Activated CD4-positive, alpha-beta T cell treated with anti-CD3 and anti-CD28 coated beads, Interleukin-2, amount 10 ng/mL, durations not matched to agents 24 days and 14 days (primary cell): ENCODE measurements at regions of chr17 and their contacts with region 1.

Region 1: DNA sequence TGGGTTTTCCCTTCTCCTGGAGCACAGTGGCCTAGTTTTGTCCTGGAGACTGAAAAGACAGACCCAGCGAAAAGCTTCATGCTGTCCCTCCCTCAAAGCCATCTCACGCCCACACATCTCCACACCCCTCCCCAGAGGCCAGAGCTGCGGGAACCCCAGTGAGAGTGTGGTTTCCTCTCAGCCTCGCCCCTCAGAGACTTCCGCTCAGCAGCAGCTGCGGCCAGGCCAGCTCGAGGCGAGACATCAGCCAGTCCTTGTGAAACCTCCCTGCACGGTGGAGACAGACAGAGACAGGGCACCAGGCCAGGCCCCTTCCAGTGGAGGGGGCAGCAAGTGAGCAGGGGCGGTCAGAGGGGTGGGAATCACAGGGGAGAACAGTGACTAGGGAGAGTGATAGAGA is 77.0 kb upstream of the TNRC6C start:
- DNase-seq: peak; percentile 95
- H3K4me3 Mint-ChIP-seq: peak overlapping the region; percentile 83
- H3K27ac Mint-ChIP-seq: peak overlapping the region; percentile 90
- H3K4me1 Mint-ChIP-seq: peaks cover 52% of the 10 kb centered on the region
- H3K27me3 Mint-ChIP-seq: peaks cover 12% of the 10 kb centered on the region

Region 2: GRCh38 chr17:77666881-77667395 is 214.6 kb before region 1 on chr17:
- intact Hi-C with region 1: loop called (anchors 10 kb)
- DNase-seq: peak; percentile 95
- H3K4me3 Mint-ChIP-seq: peak overlapping the region; percentile 88
- H3K27ac Mint-ChIP-seq: peak overlapping the region; percentile 97
- H3K4me1 Mint-ChIP-seq: peaks cover 34% of the 10 kb centered on the region
- H3K27me3 Mint-ChIP-seq: no peaks in the 10 kb centered on the region

Region 3: GRCh38 chr17:77779711-77780539 is 101.6 kb before region 1 on chr17:
- intact Hi-C with region 1: loop called (anchors 5 kb)
- DNase-seq: no peak
- H3K4me3 Mint-ChIP-seq: no peak overlapping the region
- H3K27ac Mint-ChIP-seq: no peak overlapping the region
- H3K4me1 Mint-ChIP-seq: peaks cover 13% of the 10 kb centered on the region
- H3K27me3 Mint-ChIP-seq: no peaks in the 10 kb centered on the region

Region 4: GRCh38 chr17:77842528-77843147 is 38.9 kb before region 1 on chr17:
- intact Hi-C with region 1: loop called (anchors 1 kb)
- DNase-seq: no peak
- H3K4me3 Mint-ChIP-seq: peak overlapping the region; percentile 3
- H3K27ac Mint-ChIP-seq: peak overlapping the region; percentile 89
- H3K4me1 Mint-ChIP-seq: peaks cover 45% of the 10 kb centered on the region
- H3K27me3 Mint-ChIP-seq: peaks cover 15% of the 10 kb centered on the region

Region 5: DNA sequence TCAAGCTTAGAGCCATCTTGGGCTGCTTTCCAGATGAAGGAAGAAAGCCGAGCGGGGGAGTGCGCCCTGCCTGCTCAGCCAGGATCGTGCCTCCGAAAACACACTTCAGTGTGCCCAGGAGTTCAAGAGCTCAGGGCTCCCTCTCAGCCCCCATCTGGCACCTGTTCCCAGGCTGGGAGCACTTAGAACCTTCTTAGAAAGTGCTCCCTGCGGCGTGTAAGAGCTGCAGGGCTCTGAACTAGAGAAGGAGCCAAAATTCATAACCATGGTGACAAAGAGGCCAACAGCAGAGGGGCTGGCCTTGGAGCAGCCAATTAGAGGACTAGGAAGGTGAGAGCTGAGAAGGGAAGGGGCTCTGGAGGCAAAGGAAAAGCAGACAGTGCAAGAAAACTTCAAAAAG is 18.0 kb after region 1 on chr17:
- intact Hi-C with region 1: no loop called
- DNase-seq: no peak
- H3K4me3 Mint-ChIP-seq: no peak overlapping the region
- H3K27ac Mint-ChIP-seq: no peak overlapping the region
- H3K4me1 Mint-ChIP-seq: no peaks in the 10 kb centered on the region
- H3K27me3 Mint-ChIP-seq: peaks cover 17% of the 10 kb centered on the region